Caco-2 (cell line): ENCODE measurements at regions of chr16 and their contacts with region 1.

Region 1: DNA sequence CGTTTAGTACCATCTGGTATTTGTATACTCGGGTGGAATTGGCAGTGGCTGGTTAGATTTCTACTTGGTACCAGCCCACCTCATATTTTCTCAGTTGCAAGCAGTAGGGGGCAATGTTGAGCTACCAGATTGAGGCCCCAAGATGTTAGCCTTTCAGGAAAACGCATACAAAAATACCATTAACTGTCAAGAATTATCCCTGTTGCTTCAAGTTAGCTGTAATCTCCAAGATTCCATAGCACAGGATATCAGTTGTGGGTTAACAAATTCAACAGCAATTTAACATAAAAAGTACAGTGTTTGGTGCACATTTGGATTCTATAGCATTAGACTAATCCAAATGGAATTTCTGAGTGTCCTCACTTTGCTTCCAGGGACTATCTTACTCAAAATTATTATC is 188.2 kb downstream of the FTO start:
- DNase-seq: peak; percentile 69 to 82
- H3K4me3 ChIP-seq: no peak overlapping the region
- H3K4me3 Mint-ChIP-seq: no peak overlapping the region
- H3K27ac Mint-ChIP-seq: no peak overlapping the region
- H3K4me1 ChIP-seq: peaks cover 45% of the 10 kb centered on the region
- H3K4me1 Mint-ChIP-seq: peaks cover 42% of the 10 kb centered on the region
- H3K27me3 ChIP-seq: no peaks in the 10 kb centered on the region
- H3K27me3 Mint-ChIP-seq: no peaks in the 10 kb centered on the region
- CTCF ChIP-seq: peak; percentile 79 to 82

Region 2: DNA sequence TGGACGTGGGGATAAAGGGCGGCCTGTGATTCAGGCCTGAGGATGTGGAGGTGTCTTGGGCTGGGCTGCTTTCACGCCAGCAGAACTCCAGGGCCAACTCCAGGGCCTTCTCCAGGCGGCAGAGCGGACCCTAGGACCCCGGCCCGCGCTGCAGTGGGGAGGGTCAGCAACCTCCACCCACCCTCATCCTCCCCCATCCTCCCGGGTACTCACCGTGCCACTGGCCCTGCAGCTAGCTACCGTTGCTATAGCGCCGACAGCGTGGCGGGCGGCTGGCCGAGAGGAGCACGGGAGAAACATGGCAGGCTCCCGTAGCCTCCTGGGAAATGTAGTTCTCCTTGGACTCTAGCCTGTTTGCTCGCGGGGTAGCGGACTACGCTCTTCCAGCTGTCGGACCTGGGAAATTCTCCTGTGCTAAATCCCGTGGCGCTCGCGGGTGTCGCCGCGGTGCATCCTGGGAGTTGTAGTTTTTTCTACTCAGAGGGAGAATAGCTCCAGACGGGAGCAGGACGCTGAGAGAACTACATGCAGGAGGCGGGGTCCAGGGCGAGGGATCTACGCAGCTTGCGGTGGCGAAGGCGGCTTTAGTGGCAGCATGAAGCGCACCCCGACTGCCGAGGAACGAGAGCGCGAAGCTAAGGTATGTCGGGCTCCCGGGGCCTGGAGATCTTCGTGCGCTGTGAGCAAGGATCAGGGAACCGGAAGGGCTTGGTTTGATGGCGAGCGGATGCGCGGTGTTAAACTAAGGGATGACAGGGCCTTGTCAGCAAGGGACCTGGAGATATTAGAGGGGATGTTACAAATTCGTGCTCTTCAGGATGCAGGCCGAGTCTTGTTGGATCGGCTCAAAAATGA is 188.3 kb before region 1 on chr16 and contains the starts of genes FTO and RPGRIP1L:
- CTCF ChIA-PET with region 1: no interaction called
- POLR2A ChIA-PET with region 1: no interaction called
- intact Hi-C with region 1: no loop called
- DNase-seq: peak; percentile 100
- H3K4me3 ChIP-seq: peak within 1 kb of the TSS; percentile 82
- H3K4me3 Mint-ChIP-seq: peak within 1 kb of the TSS; percentile 89
- H3K27ac Mint-ChIP-seq: peak within 1 kb of the TSS; percentile 72
- H3K4me1 ChIP-seq: peaks cover 8% of the 10 kb centered on the region; the same call in 1 of the 2 replicates
- H3K4me1 Mint-ChIP-seq: no peaks in the 10 kb centered on the region
- H3K27me3 ChIP-seq: no peaks in the 10 kb centered on the region
- H3K27me3 Mint-ChIP-seq: no peaks in the 10 kb centered on the region
- CTCF ChIP-seq: no peak
- total RNA-seq, gene FTO: 76.3 and 78.3 TPM in 2 replicates
- total RNA-seq, gene RPGRIP1L: 16.1 and 17.8 TPM in 2 replicates

Region 3: GRCh38 chr16:53782148-53782547 is 110.0 kb before region 1 on chr16:
- CTCF ChIA-PET with region 1: no interaction called
- POLR2A ChIA-PET with region 1: no interaction called
- intact Hi-C with region 1: no loop called
- DNase-seq: no peak
- H3K4me3 ChIP-seq: no peak overlapping the region
- H3K4me3 Mint-ChIP-seq: no peak overlapping the region
- H3K27ac Mint-ChIP-seq: no peak overlapping the region
- H3K4me1 ChIP-seq: peaks cover 30% of the 10 kb centered on the region
- H3K4me1 Mint-ChIP-seq: peaks cover 48% of the 10 kb centered on the region
- H3K27me3 ChIP-seq: no peaks in the 10 kb centered on the region
- H3K27me3 Mint-ChIP-seq: no peaks in the 10 kb centered on the region
- CTCF ChIP-seq: no peak

Region 4: DNA sequence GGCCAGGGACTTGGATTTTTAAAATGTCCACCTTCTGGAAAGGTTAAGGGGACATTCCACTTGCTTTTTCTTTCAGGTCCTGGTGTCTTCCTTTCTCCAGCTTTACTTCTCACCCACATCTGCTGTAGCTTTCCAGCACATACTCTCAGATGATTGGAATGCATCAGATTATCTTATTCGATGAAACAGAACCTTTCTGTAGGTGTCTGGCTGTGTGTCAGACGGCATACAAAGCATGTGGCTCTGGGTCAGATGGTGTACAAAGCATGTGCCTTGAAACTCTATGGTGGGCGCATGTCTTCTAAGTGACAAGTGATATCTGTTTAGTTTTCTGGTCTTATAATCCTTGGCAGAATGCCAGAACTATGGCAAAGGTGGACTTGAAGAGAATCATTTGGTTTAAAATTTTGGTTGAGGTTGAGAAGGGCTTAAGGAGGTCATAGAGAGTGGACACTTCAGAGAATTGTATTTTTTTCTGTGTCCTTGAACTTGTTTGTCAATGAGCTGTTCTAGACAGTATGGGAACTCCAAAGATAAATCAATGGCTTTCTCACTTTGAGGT is 62.9 kb before region 1 on chr16:
- CTCF ChIA-PET with region 1: no interaction called
- POLR2A ChIA-PET with region 1: no interaction called
- intact Hi-C with region 1: no loop called
- DNase-seq: no peak
- H3K4me3 ChIP-seq: no peak overlapping the region
- H3K4me3 Mint-ChIP-seq: no peak overlapping the region
- H3K27ac Mint-ChIP-seq: no peak overlapping the region
- H3K4me1 ChIP-seq: no peaks in the 10 kb centered on the region
- H3K4me1 Mint-ChIP-seq: no peaks in the 10 kb centered on the region
- H3K27me3 ChIP-seq: no peaks in the 10 kb centered on the region
- H3K27me3 Mint-ChIP-seq: no peaks in the 10 kb centered on the region
- CTCF ChIP-seq: no peak

Region 5: GRCh38 chr16:53925107-53925410 is 32.9 kb after region 1 on chr16:
- CTCF ChIA-PET with region 1: interaction called, 9 read pairs
- POLR2A ChIA-PET with region 1: interaction called, 6 read pairs
- intact Hi-C with region 1: loop called (anchors 1 kb)
- DNase-seq: peak; percentile 81 to 82
- H3K4me3 ChIP-seq: no peak overlapping the region
- H3K4me3 Mint-ChIP-seq: peak overlapping the region; percentile 55
- H3K27ac Mint-ChIP-seq: peak overlapping the region; percentile 79
- H3K4me1 ChIP-seq: peaks cover 43% of the 10 kb centered on the region
- H3K4me1 Mint-ChIP-seq: peaks cover 28% of the 10 kb centered on the region
- H3K27me3 ChIP-seq: no peaks in the 10 kb centered on the region
- H3K27me3 Mint-ChIP-seq: no peaks in the 10 kb centered on the region
- CTCF ChIP-seq: no peak

Region 6: DNA sequence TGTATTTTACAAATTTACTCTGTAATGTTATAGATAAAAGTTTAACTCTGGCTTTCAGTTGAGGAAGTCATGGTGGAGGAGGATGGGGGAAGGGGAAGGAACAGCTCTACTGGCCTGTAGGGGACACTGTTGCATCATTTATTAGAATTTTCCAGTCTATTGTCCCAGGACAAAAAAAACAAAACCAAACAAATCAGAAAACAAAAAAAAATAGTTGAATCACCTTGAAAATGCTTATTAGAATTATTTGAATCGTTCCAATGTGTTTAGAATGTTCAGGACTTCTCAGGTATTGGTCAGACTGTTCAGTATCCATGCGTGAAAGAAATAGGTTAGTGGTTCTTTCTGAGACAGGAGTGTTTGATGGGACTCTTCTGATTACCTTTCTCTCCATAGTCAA is 53.8 kb after region 1 on chr16:
- CTCF ChIA-PET with region 1: interaction called, 3 read pairs
- POLR2A ChIA-PET with region 1: no interaction called
- intact Hi-C with region 1: loop called (anchors 1 kb)
- DNase-seq: peak in 1 of 2 experiments; percentile 65
- H3K4me3 ChIP-seq: no peak overlapping the region
- H3K4me3 Mint-ChIP-seq: no peak overlapping the region
- H3K27ac Mint-ChIP-seq: no peak overlapping the region
- H3K4me1 ChIP-seq: peaks cover 14% of the 10 kb centered on the region
- H3K4me1 Mint-ChIP-seq: peaks cover 7% of the 10 kb centered on the region
- H3K27me3 ChIP-seq: no peaks in the 10 kb centered on the region
- H3K27me3 Mint-ChIP-seq: no peaks in the 10 kb centered on the region
- CTCF ChIP-seq: peak; percentile 69 to 87

Region 7: GRCh38 chr16:54171626-54172525 is 279.7 kb after region 1 on chr16:
- CTCF ChIA-PET with region 1: no interaction called
- POLR2A ChIA-PET with region 1: no interaction called
- intact Hi-C with region 1: loop called (anchors 1 kb)
- DNase-seq: peak; percentile 69 to 76
- H3K4me3 ChIP-seq: peak overlapping the region; percentile 22
- H3K4me3 Mint-ChIP-seq: peak overlapping the region; percentile 54
- H3K27ac Mint-ChIP-seq: no peak overlapping the region
- H3K4me1 ChIP-seq: peaks cover 48% of the 10 kb centered on the region
- H3K4me1 Mint-ChIP-seq: peaks cover 39% of the 10 kb centered on the region
- H3K27me3 ChIP-seq: no peaks in the 10 kb centered on the region
- H3K27me3 Mint-ChIP-seq: no peaks in the 10 kb centered on the region
- CTCF ChIP-seq: no peak

Region 8: DNA sequence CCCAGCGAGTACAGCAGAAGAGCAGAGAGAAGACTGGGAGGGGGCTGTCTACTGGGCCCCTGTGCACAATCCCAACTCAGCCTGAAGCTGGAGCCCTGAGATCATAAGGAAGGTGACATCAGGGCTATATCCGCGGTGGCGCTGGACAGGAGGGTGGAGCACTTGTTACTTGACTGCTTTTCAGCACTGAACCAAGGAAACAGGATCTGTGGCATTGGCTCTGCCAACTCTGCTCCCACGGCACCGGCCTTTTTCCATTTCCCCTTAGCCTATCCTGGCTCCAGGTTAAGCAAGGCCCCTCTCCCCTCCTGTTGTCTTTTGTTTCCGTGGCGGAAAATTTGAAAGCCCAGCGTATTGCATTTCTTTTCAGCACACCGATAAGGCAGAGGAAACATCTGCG is 519.4 kb after region 1 on chr16:
- CTCF ChIA-PET with region 1: no interaction called
- POLR2A ChIA-PET with region 1: no interaction called
- intact Hi-C with region 1: loop called (anchors 10 kb)
- DNase-seq: no peak
- H3K4me3 ChIP-seq: no peak overlapping the region
- H3K4me3 Mint-ChIP-seq: no peak overlapping the region
- H3K27ac Mint-ChIP-seq: peak overlapping the region; percentile 65
- H3K4me1 ChIP-seq: no peaks in the 10 kb centered on the region
- H3K4me1 Mint-ChIP-seq: peaks cover 7% of the 10 kb centered on the region
- H3K27me3 ChIP-seq: no peaks in the 10 kb centered on the region
- H3K27me3 Mint-ChIP-seq: no peaks in the 10 kb centered on the region
- CTCF ChIP-seq: no peak

Region 9: GRCh38 chr16:54627616-54628015 is 735.5 kb after region 1 on chr16:
- CTCF ChIA-PET with region 1: no interaction called
- POLR2A ChIA-PET with region 1: no interaction called
- intact Hi-C with region 1: loop called (anchors 2 kb)
- DNase-seq: no peak
- H3K4me3 ChIP-seq: no peak overlapping the region
- H3K4me3 Mint-ChIP-seq: peak overlapping the region; percentile 13
- H3K27ac Mint-ChIP-seq: peak overlapping the region; percentile 75
- H3K4me1 ChIP-seq: peaks cover 33% of the 10 kb centered on the region
- H3K4me1 Mint-ChIP-seq: peaks cover 42% of the 10 kb centered on the region
- H3K27me3 ChIP-seq: no peaks in the 10 kb centered on the region
- H3K27me3 Mint-ChIP-seq: no peaks in the 10 kb centered on the region
- CTCF ChIP-seq: no peak